Pancreas (tissue), 10 donors: ENCODE measurements at regions of chr1 and their contacts with region 1.

Region 1: DNA sequence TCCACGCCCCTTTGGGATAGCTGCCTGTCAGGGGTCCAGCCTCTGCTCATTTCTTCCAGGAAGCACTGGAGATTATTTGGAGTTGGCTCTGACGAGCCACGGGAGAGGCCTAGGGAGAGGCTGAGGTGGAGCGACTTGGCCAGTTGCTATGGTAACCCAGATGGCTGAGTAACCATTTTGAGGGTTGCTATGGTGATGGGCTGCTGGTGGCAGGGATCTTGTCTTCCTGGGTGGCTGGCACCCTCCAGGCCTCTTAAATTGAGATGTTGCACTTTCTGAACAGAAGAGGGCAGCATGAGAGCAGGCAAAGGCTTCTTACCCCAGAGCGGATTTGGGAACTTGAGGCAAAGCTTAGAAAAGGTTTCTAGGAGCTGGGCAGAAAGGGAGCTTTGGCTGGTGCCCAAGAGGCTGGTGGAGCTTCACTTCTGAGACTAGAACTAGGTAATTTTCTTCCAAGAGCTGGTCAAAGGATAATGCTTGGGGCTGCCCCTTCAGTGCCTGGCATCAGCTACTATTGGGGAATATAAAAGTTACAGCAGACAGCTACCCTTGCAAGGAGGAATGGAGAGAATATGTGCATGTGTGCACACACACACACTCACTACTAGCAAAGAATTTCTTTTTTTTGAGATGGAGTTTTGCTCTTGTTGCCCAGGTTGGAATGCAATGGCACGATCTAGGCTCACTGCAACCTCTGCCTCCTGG is 72.5 kb downstream of the NDUFS5 start:
- DNase-seq: peak; percentile 50 to 74 (median 63)
- ATAC-seq: peak; percentile 71 to 87 (median 87)
- H3K4me3 ChIP-seq: no peak overlapping the region
- H3K27ac ChIP-seq: no peak overlapping the region
- H3K4me1 ChIP-seq: no peaks in the 10 kb centered on the region
- H3K27me3 ChIP-seq: no peaks in the 10 kb centered on the region
- CTCF ChIP-seq: peak; percentile 8 to 56 (median 52)

Region 2: GRCh38 chr1:39189592-39190041 is 90.9 kb after region 1 on chr1:
- intact Hi-C with region 1: loop called in 1 of 3 experiments (anchors 5 kb)
- DNase-seq: no peak
- ATAC-seq: no peak
- H3K4me3 ChIP-seq: no peak overlapping the region
- H3K27ac ChIP-seq: no peak overlapping the region
- H3K4me1 ChIP-seq: peaks cover 9 to 21% (median 15%) of the 10 kb centered on the region in 3 donors
- H3K27me3 ChIP-seq: no peaks in the 10 kb centered on the region
- CTCF ChIP-seq: no peak

Region 3: DNA sequence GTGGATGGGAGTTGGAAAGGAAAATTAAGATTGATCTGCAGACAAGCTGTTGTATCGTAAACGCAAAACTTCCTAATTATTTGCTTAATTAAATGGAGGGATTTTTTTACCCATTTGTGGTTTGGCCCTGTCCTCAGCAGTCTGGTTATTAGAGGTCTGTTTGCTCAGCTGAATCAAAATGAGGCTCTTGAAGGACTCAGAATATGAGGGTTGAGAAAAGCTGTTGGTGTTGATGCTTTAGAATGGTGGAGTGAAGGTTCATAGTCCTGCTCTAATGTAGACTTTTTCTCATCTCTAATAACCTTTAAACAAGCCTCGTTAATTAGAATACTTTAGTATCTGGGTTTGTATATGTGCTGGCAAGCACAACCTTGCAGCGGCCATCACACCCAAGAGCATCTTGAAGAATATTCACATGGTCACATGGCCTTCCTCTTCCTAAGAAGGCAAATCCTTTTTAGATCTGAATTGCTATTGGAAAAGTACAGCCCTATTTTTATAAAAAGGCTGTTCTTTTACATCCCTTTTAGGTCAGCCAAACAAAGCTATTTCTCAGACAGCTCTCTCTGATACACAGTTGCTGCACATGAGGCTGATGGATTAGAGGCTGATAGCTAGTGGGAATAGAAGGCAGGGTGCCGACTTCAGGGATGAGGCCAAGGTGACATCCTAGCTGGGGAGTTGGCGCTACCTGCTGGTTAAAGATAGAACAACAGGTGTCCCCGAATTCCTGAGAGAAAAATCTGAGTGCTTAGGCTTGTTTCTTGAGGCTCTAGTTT is 159.6 kb after region 1 on chr1:
- intact Hi-C with region 1: loop called (anchors 5 kb)
- DNase-seq: peak in 5 of 6 donors; percentile 37 to 77 (median 62)
- ATAC-seq: peak; percentile 86 to 95 (median 92)
- H3K4me3 ChIP-seq: no peak overlapping the region
- H3K27ac ChIP-seq: no peak overlapping the region
- H3K4me1 ChIP-seq: no peaks in the 10 kb centered on the region
- H3K27me3 ChIP-seq: no peaks in the 10 kb centered on the region
- CTCF ChIP-seq: peak; percentile 55 to 79 (median 71)

Region 4: GRCh38 chr1:39378377-39378776 is 279.7 kb after region 1 on chr1:
- intact Hi-C with region 1: loop called in 1 of 3 experiments (anchors 10 kb)
- DNase-seq: no peak
- ATAC-seq: peak; percentile 56 to 89 (median 84)
- H3K4me3 ChIP-seq: no peak overlapping the region
- H3K27ac ChIP-seq: no peak overlapping the region
- H3K4me1 ChIP-seq: no peaks in the 10 kb centered on the region
- H3K27me3 ChIP-seq: no peaks in the 10 kb centered on the region
- CTCF ChIP-seq: peak in 2 of 4 donors; percentile 24 to 39

Region 5: GRCh38 chr1:39538588-39539465 is 440.1 kb after region 1 on chr1:
- intact Hi-C with region 1: loop called in 1 of 3 experiments (anchors 10 kb)
- DNase-seq: peak in 4 of 6 donors; percentile 52 to 69 (median 63)
- ATAC-seq: peak; percentile 92 to 94 (median 92)
- H3K4me3 ChIP-seq: no peak overlapping the region
- H3K27ac ChIP-seq: no peak overlapping the region
- H3K4me1 ChIP-seq: no peaks in the 10 kb centered on the region
- H3K27me3 ChIP-seq: no peaks in the 10 kb centered on the region
- CTCF ChIP-seq: peak; percentile 64 to 85 (median 67)